ENCODE measurements at regions of chr4 and their contacts with region 1.

Region 1: DNA sequence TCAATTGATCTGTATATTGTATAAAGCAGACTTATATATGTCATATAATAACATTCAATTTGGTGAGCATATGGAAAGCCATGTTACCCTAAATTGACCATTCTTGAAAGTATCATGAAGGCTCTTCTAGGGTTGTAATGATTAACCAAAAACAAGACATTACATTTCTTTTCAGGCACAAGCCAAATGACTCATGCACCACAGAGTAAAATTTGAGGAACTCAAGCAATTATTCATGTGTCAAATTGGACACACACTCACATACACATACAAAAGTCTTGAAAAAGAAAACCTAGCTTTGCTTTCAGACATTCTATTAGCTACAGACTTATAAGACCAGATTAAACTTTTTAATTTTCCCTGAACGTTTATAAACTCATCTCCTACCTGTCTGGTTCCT is 146.5 kb upstream of the PCDH18 start:
- DNase-seq: no peak
- H3K4me3 ChIP-seq: no peak overlapping the region
- H3K27ac ChIP-seq: no peak overlapping the region
- H3K4me1 ChIP-seq: no peaks in the 10 kb centered on the region
- H3K27me3 ChIP-seq: no peaks in the 10 kb centered on the region
- CTCF ChIP-seq: no peak
- EP300 ChIP-seq: no peak
- POLR2A ChIP-seq: no peak

Region 2: GRCh38 chr4:137378821-137379220 is 300.0 kb before region 1 on chr4:
- intact Hi-C with region 1: no loop called
- DNase-seq: no peak
- H3K4me3 ChIP-seq: no peak overlapping the region
- H3K27ac ChIP-seq: no peak overlapping the region
- H3K4me1 ChIP-seq: no peaks in the 10 kb centered on the region
- H3K27me3 ChIP-seq: no peaks in the 10 kb centered on the region
- CTCF ChIP-seq: no peak
- EP300 ChIP-seq: no peak
- POLR2A ChIP-seq: no peak

Region 3: DNA sequence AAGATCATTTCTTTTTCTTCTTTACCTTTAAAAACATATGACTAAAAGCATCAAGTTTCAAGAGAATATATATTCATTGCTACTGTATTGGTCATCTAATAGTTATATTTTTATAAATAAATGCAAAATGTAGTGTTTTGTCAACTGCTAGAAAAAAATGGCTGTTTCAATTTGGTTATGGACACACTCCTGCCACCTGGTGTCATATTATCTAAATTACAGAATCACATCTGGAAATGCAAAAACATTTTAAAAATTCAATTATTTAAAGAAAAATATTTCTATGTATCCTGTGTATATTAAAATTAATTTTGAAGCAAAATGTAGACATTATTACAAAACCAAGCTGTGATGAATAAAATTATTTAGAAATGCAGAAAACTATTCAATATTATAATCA is 182.9 kb after region 1 on chr4:
- intact Hi-C with region 1: no loop called
- DNase-seq: no peak
- H3K4me3 ChIP-seq: no peak overlapping the region
- H3K27ac ChIP-seq: no peak overlapping the region
- H3K4me1 ChIP-seq: no peaks in the 10 kb centered on the region
- H3K27me3 ChIP-seq: no peaks in the 10 kb centered on the region
- CTCF ChIP-seq: peak; percentile 16 to 60 (median 27)
- EP300 ChIP-seq: no peak
- POLR2A ChIP-seq: no peak

Region 4: DNA sequence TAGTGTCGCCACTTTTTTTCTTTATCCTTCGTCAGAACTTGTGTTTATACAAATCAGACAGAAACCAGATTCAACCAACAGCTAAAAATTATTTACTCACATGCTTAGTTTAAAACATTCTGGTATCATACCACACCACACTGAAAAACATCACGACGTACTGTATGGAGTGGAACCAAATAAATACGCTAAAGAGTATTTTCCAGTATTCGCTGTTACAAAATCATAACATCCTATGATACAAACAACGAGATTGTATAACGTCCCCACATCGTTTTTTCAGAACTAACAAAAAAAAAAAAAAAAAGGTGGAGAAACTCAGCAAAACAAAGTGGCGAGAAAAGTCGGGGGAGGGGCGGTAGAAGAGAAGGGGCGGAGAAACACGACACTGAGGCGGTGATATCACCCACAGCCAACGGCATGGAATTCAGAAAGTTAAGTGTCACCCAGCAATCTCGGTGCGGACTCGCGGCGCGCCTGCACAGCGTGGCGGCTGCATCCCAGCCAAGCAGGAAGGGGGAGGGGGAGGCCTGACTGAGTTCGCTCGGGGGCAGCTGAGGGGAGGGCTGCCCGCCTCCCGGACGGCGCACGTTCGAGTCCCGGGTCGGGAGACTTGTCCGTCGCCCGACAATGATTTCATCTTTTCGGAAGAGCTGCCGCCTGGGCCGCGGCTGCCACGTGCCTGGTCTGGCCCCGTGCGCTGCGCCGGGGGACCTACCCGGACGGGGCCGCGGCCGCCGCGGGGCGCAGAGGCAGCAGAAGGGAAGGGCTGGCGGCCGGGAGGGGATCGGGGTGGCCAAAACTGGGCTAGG is 1876.3 kb after region 1 on chr4:
- intact Hi-C with region 1: loop called in 1 of 4 experiments (anchors 5 kb)
- DNase-seq: peak; percentile 89 to 94 (median 89)
- H3K4me3 ChIP-seq: peak overlapping the region; percentile 82
- H3K27ac ChIP-seq: peak overlapping the region; percentile 82 to 99
- H3K4me1 ChIP-seq: peaks cover 19% of the 10 kb centered on the region
- H3K27me3 ChIP-seq: no peaks in the 10 kb centered on the region
- CTCF ChIP-seq: no peak
- EP300 ChIP-seq: no peak
- POLR2A ChIP-seq: peak; percentile 81

Measured in ovary (tissue), 10 donors.